ENCODE measurements at regions of chr2 and their contacts with region 1.

Region 1: GRCh38 chr2:85707304-85707703 is 13.1 kb downstream of the GNLY start:
- DNase-seq: peak; percentile 73
- CTCF ChIP-seq: peak; percentile 83

Region 2: DNA sequence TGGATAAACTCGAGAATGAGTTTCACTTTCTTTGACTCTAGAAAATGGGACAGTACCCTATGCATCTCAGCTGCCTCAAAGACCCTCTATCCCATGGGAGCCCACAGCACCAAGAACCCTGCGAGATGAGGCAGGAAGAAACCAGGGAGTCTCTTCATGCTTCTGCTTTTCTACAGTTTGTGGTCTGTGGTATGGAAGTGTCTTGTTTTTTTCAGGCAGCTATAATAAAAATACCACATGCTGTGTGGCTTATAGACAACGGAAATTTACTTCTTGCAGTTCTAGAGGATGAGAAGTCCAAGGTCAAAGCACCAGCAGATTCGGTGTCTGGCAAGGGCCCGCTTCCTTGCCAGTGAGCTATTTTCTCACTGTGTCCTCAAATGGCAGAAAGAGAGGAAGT is 1506.1 kb before region 1 on chr2:
- CTCF ChIA-PET with region 1: no interaction called
- POLR2A ChIA-PET with region 1: no interaction called
- DNase-seq: no peak
- CTCF ChIP-seq: no peak

Region 3: GRCh38 chr2:85635636-85636035 is 71.7 kb before region 1 on chr2:
- CTCF ChIA-PET with region 1: interaction called, 117 read pairs
- POLR2A ChIA-PET with region 1: no interaction called
- DNase-seq: no peak
- CTCF ChIP-seq: no peak

Region 4: GRCh38 chr2:85655961-85656417 is 51.3 kb before region 1 on chr2:
- CTCF ChIA-PET with region 1: interaction called, 14 read pairs
- POLR2A ChIA-PET with region 1: no interaction called
- DNase-seq: no peak
- CTCF ChIP-seq: no peak

Region 5: DNA sequence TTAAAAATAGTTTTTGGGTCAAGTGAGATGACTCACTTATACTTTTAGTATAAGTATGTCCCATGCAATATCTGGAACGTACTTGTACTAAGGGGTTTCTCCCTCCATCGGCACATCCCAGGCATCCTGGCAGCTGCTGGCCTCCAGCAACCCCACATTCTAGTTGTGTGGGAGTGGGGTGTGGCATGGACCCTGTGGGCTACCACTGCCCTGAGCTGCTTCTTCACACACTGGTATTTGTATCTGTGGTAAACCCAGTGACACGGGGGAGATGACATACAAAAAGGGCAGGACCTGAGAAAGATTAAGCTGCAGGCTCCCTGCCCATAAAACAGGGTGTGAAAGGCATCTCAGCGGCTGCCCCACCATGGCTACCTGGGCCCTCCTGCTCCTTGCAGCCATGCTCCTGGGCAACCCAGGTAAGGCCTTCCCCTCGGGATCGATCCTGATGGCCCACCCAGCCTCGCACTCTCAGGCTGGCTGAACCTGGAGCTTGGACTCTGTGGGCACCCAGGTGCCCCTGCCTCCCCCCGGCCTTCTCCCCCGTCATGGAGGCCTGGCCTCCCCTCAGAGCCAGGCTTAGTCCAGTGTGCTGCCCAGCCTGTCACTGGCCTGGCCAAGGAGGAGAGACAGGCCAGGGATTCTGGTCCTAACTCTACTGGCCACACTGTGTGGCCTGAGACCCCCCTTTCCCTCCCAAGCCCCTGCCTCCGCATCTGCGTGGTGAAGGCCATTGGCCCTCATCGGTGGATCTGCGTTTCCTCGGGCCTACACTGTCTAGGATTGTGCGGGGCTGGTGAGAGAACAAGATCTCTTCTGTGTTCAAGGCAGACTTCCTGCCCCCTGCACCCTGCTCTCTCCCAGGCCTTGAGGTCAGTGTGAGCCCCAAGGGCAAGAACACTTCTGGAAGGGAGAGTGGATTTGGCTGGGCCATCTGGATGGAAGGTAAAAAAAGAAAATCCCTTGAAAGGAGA is 13.0 kb before region 1 on chr2 and contains the start of gene GNLY:
- CTCF ChIA-PET with region 1: interaction called, 42 read pairs
- POLR2A ChIA-PET with region 1: no interaction called
- DNase-seq: no peak
- CTCF ChIP-seq: no peak

Region 6: DNA sequence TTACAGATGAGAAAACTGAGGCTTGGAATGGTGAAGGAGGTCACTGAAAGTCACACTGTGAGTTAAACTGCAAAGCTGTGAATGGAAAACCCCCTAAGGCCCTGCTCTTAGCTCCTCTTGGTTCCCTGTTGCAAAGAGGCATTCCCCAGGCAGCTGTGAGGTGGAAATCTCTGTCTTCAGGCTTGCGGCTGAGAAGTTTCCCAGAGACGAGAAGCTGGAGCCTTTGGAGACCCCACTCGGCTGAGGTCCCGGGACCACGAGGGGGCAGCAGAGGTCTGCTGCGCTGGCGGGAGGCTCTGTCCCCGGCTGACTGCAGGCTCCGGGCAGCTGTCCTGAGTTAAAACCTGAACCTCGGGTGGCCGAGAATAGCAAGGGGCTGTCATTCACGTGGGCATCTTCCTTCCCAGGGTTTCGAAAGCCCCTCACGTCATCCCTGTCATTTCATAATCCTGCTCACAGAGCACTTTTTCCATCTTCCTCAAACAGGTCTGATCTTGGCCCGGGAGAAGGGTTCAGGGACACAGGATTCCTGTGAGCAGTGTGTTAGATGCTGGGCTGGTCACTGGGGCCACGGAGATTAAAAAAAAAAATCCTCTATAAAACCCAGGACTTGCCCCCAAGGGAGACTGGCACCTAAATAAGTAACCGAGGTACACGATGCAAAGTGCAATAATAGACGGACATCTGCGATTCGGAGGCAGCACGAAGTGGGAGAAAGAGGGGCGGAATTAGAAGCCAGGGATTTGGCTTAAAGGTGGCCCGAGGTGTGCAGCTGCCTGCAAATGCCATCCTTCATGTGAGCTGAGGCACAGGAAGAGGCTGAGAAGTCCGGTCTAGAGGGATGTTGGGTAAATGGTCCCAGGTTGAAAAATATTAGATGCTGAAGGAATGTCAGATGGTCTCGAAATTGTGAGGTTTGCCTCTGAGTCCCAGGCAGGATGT is 21.9 kb after region 1 on chr2:
- CTCF ChIA-PET with region 1: interaction called, 27 read pairs
- POLR2A ChIA-PET with region 1: no interaction called
- DNase-seq: peak; percentile 89
- CTCF ChIP-seq: peak; percentile 96

Measured in GM10248 (cell line).